Heart right ventricle (tissue), 16 donors: ENCODE measurements at regions of chr4 and their contacts with region 1.

Region 1: GRCh38 chr4:41538017-41538733 is at the start of gene LIMCH1:
- DNase-seq: peak; percentile 64 to 82
- ATAC-seq: peak; percentile 76 to 93 (median 82)
- H3K4me3 ChIP-seq: peak within 1 kb of the TSS in 9 of 10 donors; percentile 6 to 47 (median 39)
- H3K27ac ChIP-seq: peak within 1 kb of the TSS; percentile 44 to 96 (median 88)
- H3K4me1 ChIP-seq: peaks cover 11 to 100% (median 94%) of the 10 kb centered on the region in 9 donors
- H3K27me3 ChIP-seq: no peaks in the 10 kb centered on the region
- CTCF ChIP-seq: no peak
- total RNA-seq, gene LIMCH1: 242 to 410 (median 304) TPM

Region 2: DNA sequence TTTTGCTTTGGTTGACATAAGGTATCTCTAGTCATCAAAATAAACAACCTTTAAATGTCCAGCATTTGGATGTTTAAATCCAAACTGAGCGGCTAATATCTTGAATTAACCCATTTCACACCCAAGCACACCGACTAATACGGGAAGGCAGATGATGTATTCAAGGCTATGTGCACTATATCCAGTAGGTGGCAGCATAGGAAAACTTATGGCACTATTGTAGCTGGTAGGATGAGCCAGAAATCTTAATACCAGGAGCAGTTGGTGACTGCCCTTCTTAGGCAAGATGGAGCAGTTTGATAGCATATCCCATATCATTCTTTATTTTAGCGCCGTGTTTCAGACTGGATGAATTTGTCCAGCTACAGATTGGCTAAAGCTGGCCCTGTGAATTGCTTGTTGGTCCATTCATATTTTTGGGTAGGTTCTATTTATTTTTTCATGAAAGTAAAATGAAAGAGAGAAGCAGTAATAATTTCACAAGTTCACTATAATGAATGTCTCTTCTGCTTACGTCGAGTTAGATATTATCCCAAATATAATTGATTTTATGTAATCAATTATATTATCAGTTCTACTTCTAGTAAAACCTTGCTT is 257.0 kb before region 1 on chr4:
- intact Hi-C with region 1: loop called in 1 of 10 experiments (anchors 10 kb)
- DNase-seq: peak in 1 of 2 donors; percentile 62
- ATAC-seq: peak; percentile 92 to 96 (median 94)
- H3K4me3 ChIP-seq: no peak overlapping the region
- H3K27ac ChIP-seq: no peak overlapping the region
- H3K4me1 ChIP-seq: peaks cover 0 to 5% (median 0%) of the 10 kb centered on the region in 9 donors
- H3K27me3 ChIP-seq: peaks cover 0 to 6% (median 0%) of the 10 kb centered on the region in 7 donors
- CTCF ChIP-seq: peak; percentile 72 to 93 (median 86)

Region 3: GRCh38 chr4:41427306-41427882 is 110.8 kb before region 1 on chr4:
- intact Hi-C with region 1: loop called in 3 of 10 experiments (anchors 5 to 10 kb)
- DNase-seq: no peak
- ATAC-seq: peak in 6 of 8 donors; percentile 46 to 72 (median 60)
- H3K4me3 ChIP-seq: no peak overlapping the region
- H3K27ac ChIP-seq: peak overlapping the region; percentile 15 to 89 (median 69)
- H3K4me1 ChIP-seq: peaks cover 4 to 92% (median 80%) of the 10 kb centered on the region in 9 donors
- H3K27me3 ChIP-seq: no peaks in the 10 kb centered on the region
- CTCF ChIP-seq: no peak

Region 4: GRCh38 chr4:41590591-41590990 is 52.4 kb after region 1 on chr4:
- intact Hi-C with region 1: loop called in 1 of 10 experiments (anchors 5 kb)
- DNase-seq: peak in 1 of 2 donors; percentile 67
- ATAC-seq: peak; percentile 31 to 80 (median 57)
- H3K4me3 ChIP-seq: no peak overlapping the region
- H3K27ac ChIP-seq: peak overlapping the region in 9 of 10 donors; percentile 14 to 80 (median 45)
- H3K4me1 ChIP-seq: peaks cover 18 to 84% (median 70%) of the 10 kb centered on the region in 9 donors
- H3K27me3 ChIP-seq: no peaks in the 10 kb centered on the region
- CTCF ChIP-seq: no peak

Region 5: DNA sequence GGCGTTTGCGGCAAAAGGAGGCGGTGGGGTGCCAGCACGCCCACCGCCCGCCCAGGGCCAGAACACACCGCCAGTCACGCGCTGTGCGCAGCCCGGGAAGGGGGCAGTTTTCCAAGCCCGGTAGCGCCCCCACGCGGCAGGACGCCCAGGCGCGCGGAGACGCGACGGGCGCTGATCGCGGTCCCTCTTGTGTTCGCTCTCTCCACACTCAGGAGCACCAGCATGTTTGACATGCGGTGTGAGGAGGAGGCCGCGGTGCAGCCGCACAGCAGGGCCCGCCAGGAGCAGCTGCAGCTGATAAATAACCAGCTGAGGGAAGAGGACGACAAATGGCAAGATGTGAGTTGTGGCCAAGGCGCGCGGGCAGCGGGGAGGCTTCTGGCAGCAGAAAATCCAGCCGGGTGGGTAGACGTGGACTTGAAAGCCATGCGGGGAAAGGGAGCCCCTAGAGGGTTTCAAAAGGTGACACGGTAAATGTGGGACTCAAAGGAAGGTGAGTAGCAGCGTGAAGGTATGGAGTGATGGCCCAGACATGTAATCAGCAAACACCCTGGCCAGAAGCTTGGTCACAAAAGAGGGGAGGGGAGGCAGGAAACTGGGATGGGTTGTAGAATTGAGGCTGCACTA is 106.2 kb after region 1 on chr4:
- intact Hi-C with region 1: loop called in 1 of 10 experiments (anchors 10 kb)
- DNase-seq: peak; percentile 76 to 82
- ATAC-seq: peak; percentile 91 to 95 (median 94)
- H3K4me3 ChIP-seq: peak overlapping the region in 6 of 10 donors; percentile 12 to 27 (median 20)
- H3K27ac ChIP-seq: peak overlapping the region in 3 of 10 donors; percentile 2 to 51 (median 14)
- H3K4me1 ChIP-seq: peaks cover 0 to 45% (median 23%) of the 10 kb centered on the region in 9 donors
- H3K27me3 ChIP-seq: peaks cover 0 to 22% (median 0%) of the 10 kb centered on the region in 7 donors
- CTCF ChIP-seq: peak; percentile 84 to 97 (median 91)